ENCODE measurements at regions of chr17 and their contacts with region 1.

Region 1: DNA sequence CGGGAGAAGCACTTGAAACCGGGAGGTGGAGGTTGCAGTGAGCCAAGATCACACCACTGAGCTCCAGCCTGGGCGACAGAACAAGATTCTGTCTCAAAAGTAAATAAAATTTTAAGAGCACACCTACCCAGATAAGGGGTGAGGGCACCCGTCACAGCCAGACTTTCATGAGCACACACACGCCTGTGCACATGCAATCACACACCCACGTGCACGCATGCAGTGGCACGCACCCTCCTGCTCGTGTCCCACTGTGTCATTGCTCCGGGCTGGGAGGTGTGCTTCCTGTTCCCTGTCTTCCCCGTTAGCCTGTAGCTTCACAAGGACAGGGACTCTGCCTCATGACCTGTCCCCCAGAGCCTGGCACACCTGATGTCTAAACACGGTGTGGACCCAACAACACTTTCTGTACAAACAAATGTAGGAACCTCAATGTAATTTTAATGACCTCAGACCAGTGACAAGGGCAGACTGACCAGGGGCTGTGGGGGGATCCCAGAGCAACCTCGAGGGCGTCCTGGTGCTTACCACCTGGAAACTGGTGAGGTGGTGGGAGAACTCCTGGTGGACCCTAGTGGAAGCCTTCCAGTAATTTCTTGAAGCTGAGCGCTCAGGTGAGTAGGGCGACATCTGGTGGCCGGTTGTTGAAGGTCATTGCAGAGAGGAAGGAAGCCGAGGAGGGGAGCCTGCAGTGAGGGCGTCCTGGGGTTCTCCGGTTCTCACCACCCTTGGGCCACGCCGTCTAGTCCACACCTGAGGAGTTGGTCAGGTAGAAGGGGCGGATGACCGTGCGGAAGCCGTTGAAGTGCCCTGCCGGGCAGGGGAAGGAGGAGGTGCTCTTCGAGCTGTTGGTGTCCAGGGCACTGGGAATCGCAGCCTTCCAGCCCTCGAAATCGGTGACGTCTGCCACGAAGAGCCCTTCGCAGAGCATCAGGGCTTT is 8.6 kb downstream of the LGALS3BP start:
- DNase-seq: peak; percentile 92
- H3K4me3 ChIP-seq: no peak overlapping the region
- H3K27ac ChIP-seq: peak overlapping the region in 3 of 4 donors; percentile 10 to 61 (median 39)
- H3K4me1 ChIP-seq: peaks cover 0 to 37% (median 28%) of the 10 kb centered on the region in 4 donors
- H3K27me3 ChIP-seq: no peaks in the 10 kb centered on the region
- CTCF ChIP-seq: peak; percentile 89 to 95 (median 94)
- EP300 ChIP-seq: no peak
- POLR2A ChIP-seq: no peak

Region 2: DNA sequence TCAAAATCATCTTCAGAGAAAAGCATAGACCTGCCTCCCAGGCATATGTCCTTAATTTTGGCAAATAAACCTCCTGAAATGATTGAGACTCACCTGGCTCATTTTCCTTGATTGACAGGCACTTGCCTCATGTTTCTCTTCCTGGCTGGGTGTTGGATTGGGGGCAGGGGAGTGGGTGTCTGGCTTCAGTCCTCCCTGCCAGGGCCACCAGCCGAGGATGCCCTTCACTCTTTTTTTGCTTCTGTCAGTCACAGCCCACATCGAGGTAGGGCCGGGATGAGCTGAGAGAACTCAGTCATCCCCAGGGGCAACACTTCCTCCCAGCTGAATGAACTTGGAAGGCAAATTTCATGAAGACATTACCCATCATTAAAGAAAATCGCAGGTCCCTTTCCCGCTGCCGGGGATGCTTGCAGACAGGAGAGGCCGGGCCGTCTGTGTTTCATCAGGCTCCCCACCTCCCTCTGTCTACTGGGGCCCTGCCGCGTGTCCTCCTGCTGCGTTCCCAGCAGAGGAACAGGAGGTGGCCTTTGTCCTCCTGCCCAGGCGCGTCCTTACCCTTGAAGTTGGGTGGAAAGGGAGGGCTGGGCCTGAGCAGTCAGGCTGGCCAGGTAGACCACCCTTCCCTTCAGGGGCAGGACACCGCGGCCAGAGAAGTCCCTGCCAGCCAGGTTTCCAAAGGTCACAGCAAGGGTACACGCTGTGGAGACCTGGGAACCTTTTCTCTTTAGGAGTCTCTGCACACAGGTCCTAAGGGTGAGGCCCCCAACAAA is 382.7 kb before region 1 on chr17:
- intact Hi-C with region 1: no loop called
- DNase-seq: no peak
- H3K4me3 ChIP-seq: no peak overlapping the region
- H3K27ac ChIP-seq: no peak overlapping the region
- H3K4me1 ChIP-seq: no peaks in the 10 kb centered on the region
- H3K27me3 ChIP-seq: no peaks in the 10 kb centered on the region
- CTCF ChIP-seq: no peak
- EP300 ChIP-seq: no peak
- POLR2A ChIP-seq: no peak

Region 3: GRCh38 chr17:78781948-78782916 is 188.9 kb before region 1 on chr17 and contains the start of gene CYTH1:
- intact Hi-C with region 1: loop called (anchors 5 kb)
- DNase-seq: peak; percentile 98
- H3K4me3 ChIP-seq: peak within 1 kb of the TSS; percentile 75 to 100 (median 89)
- H3K27ac ChIP-seq: peak within 1 kb of the TSS; percentile 92 to 96 (median 94)
- H3K4me1 ChIP-seq: peaks cover 0 to 19% (median 15%) of the 10 kb centered on the region in 4 donors
- H3K27me3 ChIP-seq: no peaks in the 10 kb centered on the region
- CTCF ChIP-seq: no peak
- EP300 ChIP-seq: no peak
- POLR2A ChIP-seq: peak in 1 of 2 donors; percentile 58
- total RNA-seq, gene CYTH1: 26.7 to 38.5 (median 35.2) TPM

Region 4: GRCh38 chr17:78852709-78853121 is 118.4 kb before region 1 on chr17:
- intact Hi-C with region 1: no loop called
- DNase-seq: no peak
- H3K4me3 ChIP-seq: no peak overlapping the region
- H3K27ac ChIP-seq: no peak overlapping the region
- H3K4me1 ChIP-seq: no peaks in the 10 kb centered on the region
- H3K27me3 ChIP-seq: no peaks in the 10 kb centered on the region
- CTCF ChIP-seq: no peak
- EP300 ChIP-seq: no peak
- POLR2A ChIP-seq: no peak

Region 5: GRCh38 chr17:78865682-78866390 is 105.3 kb before region 1 on chr17:
- intact Hi-C with region 1: loop called (anchors 1 kb)
- DNase-seq: peak; percentile 91
- H3K4me3 ChIP-seq: no peak overlapping the region
- H3K27ac ChIP-seq: peak overlapping the region; percentile 44 to 75 (median 51)
- H3K4me1 ChIP-seq: peaks cover 0 to 50% (median 35%) of the 10 kb centered on the region in 4 donors
- H3K27me3 ChIP-seq: no peaks in the 10 kb centered on the region
- CTCF ChIP-seq: peak; percentile 82 to 91 (median 88)
- EP300 ChIP-seq: no peak
- POLR2A ChIP-seq: no peak

Region 6: GRCh38 chr17:78935379-78936323 is 35.5 kb before region 1 on chr17:
- intact Hi-C with region 1: loop called (anchors 5 kb)
- DNase-seq: peak; percentile 95
- H3K4me3 ChIP-seq: no peak overlapping the region
- H3K27ac ChIP-seq: peak overlapping the region; percentile 89 to 96 (median 92)
- H3K4me1 ChIP-seq: peaks cover 0 to 37% (median 35%) of the 10 kb centered on the region in 4 donors
- H3K27me3 ChIP-seq: no peaks in the 10 kb centered on the region
- CTCF ChIP-seq: no peak
- EP300 ChIP-seq: peak in 2 of 4 donors; percentile 55 to 87
- POLR2A ChIP-seq: no peak

Measured in sigmoid colon (tissue), 7 donors.